A673 (cell line): ENCODE measurements at regions of chr3 and their contacts with region 1.

Region 1: GRCh38 chr3:23923786-23924185 is 6.9 kb downstream of the RPL15 start:
- DNase-seq: no peak
- H3K4me3 ChIP-seq: no peak overlapping the region
- H3K27ac ChIP-seq: no peak overlapping the region
- H3K4me1 ChIP-seq: peaks cover 3% of the 10 kb centered on the region
- H3K27me3 ChIP-seq: no peaks in the 10 kb centered on the region
- CTCF ChIP-seq: no peak

Region 2: DNA sequence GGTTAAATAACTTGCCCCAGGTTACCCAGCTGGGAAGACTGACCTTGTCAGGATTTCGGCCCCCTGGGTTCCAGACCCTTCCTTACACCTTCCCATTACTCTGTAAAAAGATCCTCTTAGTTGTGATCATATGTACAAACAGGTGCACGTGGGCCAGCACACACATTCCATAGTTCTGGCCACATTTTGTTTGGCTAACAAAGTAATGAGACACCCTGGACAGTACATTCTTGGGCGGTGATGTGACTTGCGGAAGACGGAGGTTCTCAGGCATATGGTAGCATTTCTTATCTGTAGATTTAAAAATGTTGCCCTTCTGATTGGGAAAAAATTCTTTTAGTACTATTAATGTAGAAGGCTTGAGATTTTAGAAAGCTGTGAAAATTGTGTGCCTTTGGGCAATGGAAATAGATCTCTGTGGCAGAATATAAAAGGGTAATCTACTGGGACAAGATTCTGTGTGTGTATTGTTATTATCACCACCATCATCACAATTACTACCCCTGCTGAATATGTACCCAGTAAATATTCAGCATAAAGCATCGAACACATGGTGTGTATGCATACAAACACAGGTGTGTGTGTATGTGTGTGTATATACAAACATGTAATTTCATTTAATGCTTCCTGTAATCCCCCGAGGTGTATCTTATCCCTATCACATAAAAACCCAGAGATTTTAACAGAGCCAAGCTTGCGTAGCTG is 323.5 kb before region 1 on chr3:
- CTCF ChIA-PET with region 1: no interaction called
- POLR2A ChIA-PET with region 1: no interaction called
- intact Hi-C with region 1: no loop called
- DNase-seq: no peak
- H3K4me3 ChIP-seq: no peak overlapping the region
- H3K27ac ChIP-seq: no peak overlapping the region
- H3K4me1 ChIP-seq: no peaks in the 10 kb centered on the region
- H3K27me3 ChIP-seq: no peaks in the 10 kb centered on the region
- CTCF ChIP-seq: no peak

Region 3: GRCh38 chr3:23696842-23697241 is 226.9 kb before region 1 on chr3:
- CTCF ChIA-PET with region 1: no interaction called
- POLR2A ChIA-PET with region 1: interaction called, 12 read pairs
- intact Hi-C with region 1: no loop called
- DNase-seq: peak; percentile 17
- H3K4me3 ChIP-seq: no peak overlapping the region
- H3K27ac ChIP-seq: no peak overlapping the region
- H3K4me1 ChIP-seq: no peaks in the 10 kb centered on the region
- H3K27me3 ChIP-seq: no peaks in the 10 kb centered on the region
- CTCF ChIP-seq: no peak

Region 4: DNA sequence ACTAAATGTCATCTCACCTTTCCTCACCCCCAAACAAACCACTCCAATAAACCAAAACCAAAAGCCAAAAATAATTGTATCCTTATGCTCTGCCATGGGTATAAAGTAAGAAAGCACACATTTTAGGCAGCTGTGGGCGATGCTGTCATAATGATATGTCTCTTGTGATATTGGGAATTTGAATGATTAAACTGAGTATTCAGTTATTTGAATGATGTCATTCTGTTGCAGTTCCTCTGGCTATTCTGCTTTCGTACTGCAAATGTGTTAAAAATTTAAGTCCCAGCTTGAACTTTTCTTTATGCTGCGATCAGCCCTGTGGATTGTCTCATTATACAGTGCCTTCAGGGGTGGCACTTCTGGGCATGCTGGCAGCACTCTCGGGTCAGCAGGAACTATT is 10.5 kb after region 1 on chr3:
- CTCF ChIA-PET with region 1: no interaction called
- POLR2A ChIA-PET with region 1: no interaction called
- intact Hi-C with region 1: no loop called
- DNase-seq: no peak
- H3K4me3 ChIP-seq: no peak overlapping the region
- H3K27ac ChIP-seq: no peak overlapping the region
- H3K4me1 ChIP-seq: no peaks in the 10 kb centered on the region
- H3K27me3 ChIP-seq: no peaks in the 10 kb centered on the region
- CTCF ChIP-seq: no peak

Region 5: DNA sequence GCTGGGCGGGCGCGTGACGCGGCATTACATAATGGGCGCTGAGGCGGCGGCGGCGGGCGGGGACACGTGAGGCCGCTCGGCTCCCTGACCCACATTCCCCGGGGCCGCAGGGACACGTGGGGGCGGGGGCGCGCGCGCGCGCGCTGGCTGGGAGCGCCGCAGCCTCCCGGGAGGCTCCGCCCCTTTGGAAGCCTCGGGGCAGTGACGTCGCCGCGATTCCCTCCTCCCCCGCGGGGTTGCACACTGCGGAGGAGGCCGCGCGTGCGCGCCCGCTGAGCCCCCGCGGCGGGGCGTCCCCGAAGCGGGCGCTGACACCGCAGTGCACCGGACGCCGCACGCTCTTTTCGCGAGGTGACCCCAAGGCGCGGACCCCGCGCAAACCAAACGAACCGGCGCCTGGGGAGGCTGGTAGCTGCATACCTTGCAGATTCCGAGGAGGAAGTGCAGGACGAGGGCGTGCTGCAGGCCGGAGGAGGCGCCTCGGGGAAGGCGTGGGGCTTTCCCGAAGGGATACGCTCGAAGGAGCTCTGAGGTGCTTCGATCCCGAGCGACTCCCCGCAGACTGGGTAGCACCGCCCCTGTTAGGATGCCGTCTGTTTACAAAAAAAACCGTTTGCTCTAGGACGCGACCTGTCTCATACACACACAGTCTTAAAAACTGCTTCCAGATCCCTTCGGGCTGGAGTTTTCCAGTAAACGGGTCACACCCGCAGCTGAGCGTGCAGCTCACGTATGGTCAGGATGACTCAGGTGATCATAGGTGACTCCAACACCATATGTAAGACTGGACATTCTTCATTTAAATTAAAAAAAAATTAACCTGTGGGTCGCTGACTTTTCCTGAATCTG is 22.3 kb after region 1 on chr3:
- CTCF ChIA-PET with region 1: no interaction called
- POLR2A ChIA-PET with region 1: no interaction called
- intact Hi-C with region 1: loop called (anchors 2 kb)
- DNase-seq: peak; percentile 98
- H3K4me3 ChIP-seq: peak overlapping the region; percentile 66
- H3K27ac ChIP-seq: peak overlapping the region; percentile 87
- H3K4me1 ChIP-seq: peaks cover 7% of the 10 kb centered on the region
- H3K27me3 ChIP-seq: no peaks in the 10 kb centered on the region
- CTCF ChIP-seq: no peak

Region 6: DNA sequence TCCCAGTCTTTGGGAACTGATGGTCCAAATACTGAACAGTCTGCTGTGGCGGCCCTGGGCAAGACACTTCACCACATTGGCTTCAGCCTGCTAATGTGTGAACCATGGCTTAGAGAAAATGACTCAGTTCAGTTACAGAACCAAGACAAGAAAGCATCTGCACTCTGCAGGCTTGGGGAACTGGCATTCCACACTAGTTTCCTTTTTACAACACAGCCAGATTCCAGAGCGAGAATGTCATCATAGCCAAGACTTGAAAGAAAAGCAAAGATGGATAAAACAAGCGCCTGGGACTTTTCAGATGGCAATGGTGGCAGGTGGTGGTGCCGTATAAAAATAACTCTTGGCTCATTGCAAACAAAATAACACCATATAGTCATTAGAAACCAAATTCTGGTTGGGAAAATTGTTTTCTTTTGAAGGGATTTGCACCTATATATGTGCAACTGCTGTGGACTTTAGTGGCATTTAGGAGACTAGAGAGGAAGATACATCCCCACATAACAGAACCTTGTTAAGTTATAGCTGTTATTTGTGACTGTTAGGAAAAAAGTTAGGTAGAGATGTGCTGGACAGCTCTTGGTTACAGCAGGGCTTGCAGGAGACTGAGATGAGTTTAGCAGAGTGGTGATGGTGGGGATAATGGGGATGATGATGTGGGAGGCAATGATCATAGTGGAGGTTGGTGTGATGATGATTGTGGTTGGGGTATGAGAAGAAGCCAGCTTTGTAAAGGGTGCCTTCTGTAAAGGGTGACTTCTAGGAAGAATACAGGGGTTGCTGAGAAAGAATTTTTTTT is 297.3 kb after region 1 on chr3:
- CTCF ChIA-PET with region 1: no interaction called
- POLR2A ChIA-PET with region 1: no interaction called
- intact Hi-C with region 1: no loop called
- DNase-seq: peak; percentile 8
- H3K4me3 ChIP-seq: no peak overlapping the region
- H3K27ac ChIP-seq: no peak overlapping the region
- H3K4me1 ChIP-seq: no peaks in the 10 kb centered on the region
- H3K27me3 ChIP-seq: no peaks in the 10 kb centered on the region
- CTCF ChIP-seq: no peak